SK-N-SH (cell line): ENCODE measurements at regions of chr7 and their contacts with region 1.

Region 1: DNA sequence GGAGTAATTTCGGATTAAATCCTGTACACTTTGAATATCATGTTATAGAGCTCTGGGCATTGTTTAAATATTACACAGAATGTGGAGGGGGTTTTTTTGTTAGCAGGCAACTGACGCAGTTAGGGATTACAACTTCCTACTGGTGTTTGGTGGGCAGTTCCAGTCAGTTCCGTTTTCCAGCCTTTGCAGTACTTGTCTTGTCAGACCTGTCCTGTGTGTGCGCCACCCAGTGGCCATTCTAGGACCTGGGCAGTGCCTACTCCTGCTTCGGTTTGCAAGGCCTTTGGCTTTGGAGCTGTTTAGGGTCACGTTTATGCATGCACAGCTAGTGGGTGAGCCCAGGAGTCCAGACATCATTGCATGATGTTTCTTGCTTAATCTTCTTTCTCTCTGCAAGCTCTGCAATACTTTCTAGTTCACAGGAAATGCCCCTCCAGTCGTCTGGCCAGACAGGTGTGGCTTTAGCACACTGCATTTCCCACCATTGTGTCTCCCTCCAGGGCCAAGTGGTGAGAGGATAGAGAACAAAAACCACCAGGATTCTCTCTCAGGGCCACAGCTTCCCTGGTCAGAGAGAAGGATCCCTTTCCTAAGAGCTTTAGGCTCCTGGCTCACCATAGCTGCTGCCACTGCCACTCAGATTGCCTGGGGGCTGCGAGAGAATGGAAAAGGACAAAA is 96.5 kb upstream of the TARP start:
- DNase-seq: peak; percentile 74
- H3K4me3 ChIP-seq: no peak overlapping the region; a peak in 1 of 4 replicates
- H3K27ac ChIP-seq: peak overlapping the region in 1 of 2 experiments; percentile 23; a peak in 1 of 4 replicates
- H3K4me1 ChIP-seq: peaks cover 0 to 16% of the 10 kb centered on the region in 2 experiments; a peak in 2 of 4 replicates
- H3K27me3 ChIP-seq: no peaks in the 10 kb centered on the region; the same call in 1 of the 2 replicates
- CTCF ChIP-seq: peak; percentile 98
- EP300 ChIP-seq: no peak
- RAD21 ChIP-seq: peak; percentile 55

Region 2: DNA sequence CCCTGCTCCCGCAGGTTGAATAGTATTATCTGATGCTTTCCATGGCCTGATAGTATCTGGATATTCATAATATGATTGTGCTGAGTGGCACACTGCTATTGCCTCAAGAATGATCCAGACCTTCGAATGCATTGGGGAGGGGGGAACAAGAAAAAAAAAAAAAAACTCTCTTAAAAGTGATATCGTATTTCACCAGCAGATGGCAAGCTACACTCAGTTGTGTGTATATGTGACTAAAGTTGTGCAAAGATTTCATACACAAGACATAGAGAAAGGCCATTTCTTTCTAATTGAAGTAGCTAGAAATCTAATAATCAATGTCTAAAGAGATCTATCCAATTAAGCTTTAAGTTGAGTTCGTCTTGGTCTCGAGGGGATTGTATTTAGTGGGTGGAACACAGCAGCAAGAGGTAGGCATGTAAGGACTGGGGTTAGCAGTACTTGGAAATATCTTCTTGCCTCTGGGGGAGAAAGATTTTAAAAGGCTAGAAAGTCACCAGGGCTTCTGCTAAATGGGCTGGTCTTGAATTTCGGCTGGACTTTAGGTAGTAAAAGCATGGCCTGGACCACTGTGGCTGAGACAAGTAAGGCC is 468.6 kb before region 1 on chr7:
- CTCF ChIA-PET with region 1: interaction called, 56 read pairs
- POLR2A ChIA-PET with region 1: no interaction called
- DNase-seq: peak; percentile 47
- H3K4me3 ChIP-seq: peak overlapping the region in 1 of 2 experiments; percentile 4; a peak in 1 of 4 replicates
- H3K27ac ChIP-seq: no peak overlapping the region
- H3K4me1 ChIP-seq: peaks cover 0 to 8% of the 10 kb centered on the region in 2 experiments; a peak in 3 of 4 replicates
- H3K27me3 ChIP-seq: no peaks in the 10 kb centered on the region
- CTCF ChIP-seq: peak; percentile 83
- EP300 ChIP-seq: no peak
- RAD21 ChIP-seq: peak; percentile 85

Region 3: DNA sequence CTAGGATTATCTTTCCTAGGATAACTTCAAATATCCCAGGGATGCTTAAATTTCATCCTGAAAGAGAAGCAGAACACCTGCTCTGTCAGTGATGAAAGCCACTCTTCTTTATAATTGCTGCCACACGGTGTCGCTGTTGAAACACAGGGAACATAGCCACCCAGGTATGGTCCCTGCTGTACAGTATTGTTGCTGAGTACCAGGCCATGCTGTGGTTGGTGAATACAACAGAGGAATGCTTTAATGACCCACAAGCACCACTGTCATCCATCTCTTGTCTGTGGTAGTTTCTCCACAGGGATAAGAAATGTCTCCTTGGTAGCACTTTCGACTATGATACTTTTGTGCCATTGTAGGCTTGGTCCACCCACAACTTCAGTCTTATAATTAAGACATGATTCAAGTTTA is 262.5 kb before region 1 on chr7:
- CTCF ChIA-PET with region 1: interaction called, 54 read pairs
- POLR2A ChIA-PET with region 1: no interaction called
- DNase-seq: peak; percentile 57
- H3K4me3 ChIP-seq: no peak overlapping the region; a peak in 1 of 4 replicates
- H3K27ac ChIP-seq: no peak overlapping the region
- H3K4me1 ChIP-seq: no peaks in the 10 kb centered on the region; a peak in 1 of 4 replicates
- H3K27me3 ChIP-seq: no peaks in the 10 kb centered on the region
- CTCF ChIP-seq: peak; percentile 94
- EP300 ChIP-seq: no peak
- RAD21 ChIP-seq: peak; percentile 87

Region 4: GRCh38 chr7:38282081-38282480 is 87.9 kb before region 1 on chr7:
- CTCF ChIA-PET with region 1: interaction called, 11 read pairs
- POLR2A ChIA-PET with region 1: no interaction called
- DNase-seq: no peak
- H3K4me3 ChIP-seq: no peak overlapping the region
- H3K27ac ChIP-seq: no peak overlapping the region
- H3K4me1 ChIP-seq: no peaks in the 10 kb centered on the region; a peak in 1 of 4 replicates
- H3K27me3 ChIP-seq: 0 out of 2 replicates have a peak, but pooled peaks cover 5% of the 10 kb centered on the region
- CTCF ChIP-seq: no peak
- EP300 ChIP-seq: no peak
- RAD21 ChIP-seq: no peak

Region 5: DNA sequence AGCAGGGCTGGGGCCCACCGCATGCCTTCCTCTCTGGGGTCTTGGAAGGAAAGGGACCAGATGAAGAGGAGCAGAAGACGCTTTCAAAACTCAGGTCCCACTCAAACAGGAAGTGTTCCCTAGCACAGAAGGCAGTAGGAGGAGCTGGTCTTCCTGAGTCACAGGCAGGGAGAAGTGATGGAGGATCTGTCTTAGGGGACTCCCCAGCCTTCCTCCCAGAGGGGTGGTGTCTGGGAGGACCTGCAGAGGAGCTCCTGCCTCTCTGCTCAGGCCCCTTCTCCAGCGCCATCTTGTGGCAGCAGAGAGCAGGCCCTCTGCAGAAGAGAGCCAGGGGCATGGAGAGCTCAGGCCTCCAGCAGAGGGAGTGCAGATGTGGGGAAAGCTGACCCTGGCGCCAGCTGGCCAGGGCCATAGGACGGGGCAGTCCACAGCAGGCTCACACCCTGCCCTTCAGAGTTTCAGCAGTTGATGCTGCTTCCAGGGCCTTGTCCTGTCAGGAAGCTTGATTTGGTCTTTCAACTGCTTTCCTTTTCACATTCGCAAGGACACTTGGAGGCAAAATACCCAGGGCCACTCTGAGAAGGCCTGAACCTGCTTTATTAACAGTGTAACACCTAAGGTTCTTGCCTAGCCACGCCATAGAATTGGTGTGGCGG is 34.3 kb before region 1 on chr7:
- CTCF ChIA-PET with region 1: interaction called, 83 read pairs
- POLR2A ChIA-PET with region 1: no interaction called
- DNase-seq: peak; percentile 79
- H3K4me3 ChIP-seq: peak overlapping the region in 1 of 2 experiments; percentile 25; a peak in 1 of 4 replicates
- H3K27ac ChIP-seq: no peak overlapping the region
- H3K4me1 ChIP-seq: peaks cover 0 to 2% of the 10 kb centered on the region in 2 experiments; a peak in 1 of 4 replicates
- H3K27me3 ChIP-seq: no peaks in the 10 kb centered on the region
- CTCF ChIP-seq: peak; percentile 94
- EP300 ChIP-seq: no peak
- RAD21 ChIP-seq: peak; percentile 72

Region 6: GRCh38 chr7:38398725-38399321 is 28.9 kb after region 1 on chr7:
- CTCF ChIA-PET with region 1: interaction called, 29 read pairs
- POLR2A ChIA-PET with region 1: no interaction called
- DNase-seq: peak; percentile 67
- H3K4me3 ChIP-seq: no peak overlapping the region
- H3K27ac ChIP-seq: no peak overlapping the region
- H3K4me1 ChIP-seq: no peaks in the 10 kb centered on the region
- H3K27me3 ChIP-seq: no peaks in the 10 kb centered on the region; the same call in 1 of the 2 replicates
- CTCF ChIP-seq: peak; percentile 99
- EP300 ChIP-seq: no peak
- RAD21 ChIP-seq: peak; percentile 81

Region 7: GRCh38 chr7:38932509-38933168 is 562.7 kb after region 1 on chr7:
- CTCF ChIA-PET with region 1: no interaction called
- POLR2A ChIA-PET with region 1: no interaction called
- DNase-seq: peak; percentile 53
- H3K4me3 ChIP-seq: peak overlapping the region in 1 of 2 experiments; percentile 7; a peak in 1 of 4 replicates
- H3K27ac ChIP-seq: no peak overlapping the region
- H3K4me1 ChIP-seq: peaks cover 0 to 13% of the 10 kb centered on the region in 2 experiments; a peak in 1 of 4 replicates
- H3K27me3 ChIP-seq: no peaks in the 10 kb centered on the region; the same call in 1 of the 2 replicates
- CTCF ChIP-seq: peak; percentile 99
- EP300 ChIP-seq: no peak
- RAD21 ChIP-seq: peak; percentile 80